PC-3 (cell line): ENCODE measurements at regions of chr11 and their contacts with region 1.

Region 1: GRCh38 chr11:130390071-130390758 is 38.2 kb downstream of the ADAMTS8 start:
- DNase-seq: peak; percentile 78
- ATAC-seq: peak; percentile 98
- H3K4me3 ChIP-seq: no peak overlapping the region
- H3K27ac ChIP-seq: no peak overlapping the region
- H3K4me1 ChIP-seq: peaks cover 10% of the 10 kb centered on the region
- H3K27me3 ChIP-seq: 0 out of 2 replicates have a peak, but pooled peaks cover 9% of the 10 kb centered on the region
- CTCF ChIP-seq: peak; percentile 90

Region 2: GRCh38 chr11:130314750-130315285 is 75.4 kb before region 1 on chr11 and contains the start of gene ZBTB44:
- CTCF ChIA-PET with region 1: no interaction called
- POLR2A ChIA-PET with region 1: no interaction called
- intact Hi-C with region 1: loop called (anchors 5 kb)
- DNase-seq: peak; percentile 88
- ATAC-seq: peak; percentile 77
- H3K4me3 ChIP-seq: peak within 1 kb of the TSS; percentile 82
- H3K27ac ChIP-seq: peak within 1 kb of the TSS; percentile 40; the same call in 1 of the 2 replicates
- H3K4me1 ChIP-seq: peaks cover 19% of the 10 kb centered on the region
- H3K27me3 ChIP-seq: no peaks in the 10 kb centered on the region
- CTCF ChIP-seq: no peak
- total RNA-seq, gene ZBTB44: 27.5 and 28.9 TPM in 2 replicates

Region 3: GRCh38 chr11:130413405-130414106 is 23.3 kb after region 1 on chr11:
- CTCF ChIA-PET with region 1: no interaction called
- POLR2A ChIA-PET with region 1: no interaction called
- intact Hi-C with region 1: loop called (anchors 1 kb)
- DNase-seq: peak; percentile 97
- ATAC-seq: peak; percentile 99
- H3K4me3 ChIP-seq: peak overlapping the region; percentile 52
- H3K27ac ChIP-seq: peak overlapping the region; percentile 57
- H3K4me1 ChIP-seq: peaks cover 20% of the 10 kb centered on the region
- H3K27me3 ChIP-seq: no peaks in the 10 kb centered on the region; the same call in 1 of the 2 replicates
- CTCF ChIP-seq: no peak